ENCODE measurements at regions of chr3 and their contacts with region 1.

Region 1: GRCh38 chr3:197711973-197712707 is 24.6 kb downstream of the RUBCN start:
- DNase-seq: peak; percentile 94
- H3K4me3 Mint-ChIP-seq: peak overlapping the region; percentile 62
- H3K27ac Mint-ChIP-seq: peak overlapping the region; percentile 86
- H3K4me1 Mint-ChIP-seq: peaks cover 35% of the 10 kb centered on the region
- H3K27me3 Mint-ChIP-seq: no peaks in the 10 kb centered on the region

Region 2: GRCh38 chr3:197298341-197298857 is 413.7 kb before region 1 on chr3 and contains the start of gene DLG1:
- CTCF ChIA-PET with region 1: no interaction called
- POLR2A ChIA-PET with region 1: no interaction called
- intact Hi-C with region 1: loop called (anchors 10 kb)
- DNase-seq: peak; percentile 91
- H3K4me3 Mint-ChIP-seq: peak within 1 kb of the TSS; percentile 97
- H3K27ac Mint-ChIP-seq: peak within 1 kb of the TSS; percentile 89
- H3K4me1 Mint-ChIP-seq: peaks cover 23% of the 10 kb centered on the region
- H3K27me3 Mint-ChIP-seq: peaks cover 24% of the 10 kb centered on the region
- total RNA-seq, gene DLG1: 52.6 to 53.3 TPM

Region 3: GRCh38 chr3:197554562-197555280 is 157.4 kb before region 1 on chr3:
- CTCF ChIA-PET with region 1: no interaction called
- POLR2A ChIA-PET with region 1: interaction called, 3 read pairs
- intact Hi-C with region 1: loop called (anchors 1 kb)
- DNase-seq: peak; percentile 97
- H3K4me3 Mint-ChIP-seq: peak overlapping the region; percentile 89
- H3K27ac Mint-ChIP-seq: peak overlapping the region; percentile 92
- H3K4me1 Mint-ChIP-seq: peaks cover 12% of the 10 kb centered on the region
- H3K27me3 Mint-ChIP-seq: no peaks in the 10 kb centered on the region

Region 4: GRCh38 chr3:197736491-197737318 is 24.6 kb after region 1 on chr3 and contains the start of gene RUBCN:
- CTCF ChIA-PET with region 1: interaction called, 6 read pairs
- POLR2A ChIA-PET with region 1: interaction called, 9 read pairs
- intact Hi-C with region 1: loop called (anchors 1 kb)
- DNase-seq: peak; percentile 97
- H3K4me3 Mint-ChIP-seq: peak within 1 kb of the TSS; percentile 87
- H3K27ac Mint-ChIP-seq: peak within 1 kb of the TSS; percentile 82
- H3K4me1 Mint-ChIP-seq: peaks cover 40% of the 10 kb centered on the region
- H3K27me3 Mint-ChIP-seq: no peaks in the 10 kb centered on the region
- total RNA-seq, gene RUBCN: 32.9 to 33.3 TPM

Region 5: DNA sequence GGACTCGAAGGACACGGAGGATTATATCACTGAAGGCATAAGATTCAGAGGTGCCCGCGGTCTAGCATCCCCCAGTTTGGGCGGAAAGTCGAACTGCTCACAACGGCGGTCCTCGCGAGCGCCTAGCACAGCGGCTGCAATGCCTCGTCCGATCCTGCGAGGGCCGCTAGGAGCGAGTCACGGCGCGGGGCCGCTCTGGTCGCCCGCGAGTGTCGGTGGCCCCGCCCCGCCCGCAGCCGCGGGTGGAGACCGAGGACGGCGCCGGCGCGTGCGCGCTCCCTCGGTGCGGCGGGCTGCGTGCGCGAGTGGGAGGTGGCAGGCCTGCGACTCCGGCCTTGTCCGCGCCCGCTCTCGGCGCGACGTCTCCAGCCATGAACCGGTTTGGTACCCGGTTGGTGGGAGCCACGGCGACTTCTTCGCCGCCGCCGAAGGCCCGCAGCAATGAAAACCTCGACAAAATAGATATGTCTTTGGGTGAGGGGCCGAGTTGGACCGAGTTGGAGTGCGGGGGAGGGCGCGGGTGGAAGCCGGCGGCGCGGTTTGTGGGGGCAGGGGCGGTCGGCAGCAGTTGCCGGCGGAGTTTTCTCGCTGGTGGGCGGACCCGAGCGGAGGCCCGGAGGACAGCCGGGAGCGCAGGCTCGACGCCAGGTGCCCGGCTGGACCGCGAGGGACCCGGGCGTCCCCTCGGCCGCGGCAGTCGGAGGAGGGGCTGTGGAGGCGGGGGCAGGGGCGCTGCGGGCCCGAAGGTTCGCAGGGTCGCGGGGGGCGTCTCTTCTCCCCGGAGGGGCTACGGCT is 37.7 kb after region 1 on chr3 and contains the start of gene FYTTD1:
- CTCF ChIA-PET with region 1: interaction called, 8 read pairs
- POLR2A ChIA-PET with region 1: no interaction called
- intact Hi-C with region 1: loop called (anchors 1 kb)
- DNase-seq: peak; percentile 90
- H3K4me3 Mint-ChIP-seq: peak within 1 kb of the TSS; percentile 98
- H3K27ac Mint-ChIP-seq: peak within 1 kb of the TSS; percentile 92
- H3K4me1 Mint-ChIP-seq: peaks cover 33% of the 10 kb centered on the region
- H3K27me3 Mint-ChIP-seq: no peaks in the 10 kb centered on the region
- total RNA-seq, gene FYTTD1: 35.5 to 39.9 TPM

Region 6: GRCh38 chr3:197833930-197834715 is 122.0 kb after region 1 on chr3:
- CTCF ChIA-PET with region 1: no interaction called
- POLR2A ChIA-PET with region 1: no interaction called
- intact Hi-C with region 1: no loop called
- DNase-seq: no peak
- H3K4me3 Mint-ChIP-seq: no peak overlapping the region
- H3K27ac Mint-ChIP-seq: peak overlapping the region; percentile 56
- H3K4me1 Mint-ChIP-seq: peaks cover 9% of the 10 kb centered on the region
- H3K27me3 Mint-ChIP-seq: no peaks in the 10 kb centered on the region

Measured in activated CD4-positive, alpha-beta memory T cell treated with anti-CD3 and anti-CD28 coated beads for 36 hours (primary cell).